ENCODE measurements at regions of chr5 and their contacts with region 1.

Region 1: DNA sequence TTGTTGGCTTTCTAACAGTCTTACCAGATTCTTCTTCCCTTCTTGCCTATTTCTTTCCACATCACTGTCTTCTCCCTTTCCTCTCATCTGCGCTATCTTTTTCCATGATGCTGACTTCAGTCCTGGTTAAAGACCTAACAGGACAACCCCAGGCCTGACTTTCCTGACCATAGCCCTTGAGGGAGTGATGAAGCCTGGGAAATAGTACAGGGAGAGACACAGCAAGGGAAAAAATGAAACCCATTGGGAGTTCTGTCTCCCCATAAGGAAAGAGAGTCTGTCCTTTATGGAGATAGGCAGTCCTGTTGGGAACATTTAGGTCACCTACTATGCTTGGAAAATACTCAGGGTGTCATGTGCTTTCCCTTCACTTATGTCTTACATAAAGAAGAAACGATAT is 92.7 kb downstream of the GIN1 start:
- DNase-seq: no peak
- ATAC-seq: no peak
- H3K4me3 Mint-ChIP-seq: no peak overlapping the region
- H3K27ac Mint-ChIP-seq: no peak overlapping the region
- H3K4me1 Mint-ChIP-seq: no peaks in the 10 kb centered on the region
- H3K27me3 Mint-ChIP-seq: no peaks in the 10 kb centered on the region

Region 2: GRCh38 chr5:102792705-102793104 is 234.6 kb before region 1 on chr5:
- CTCF ChIA-PET with region 1: no interaction called
- POLR2A ChIA-PET with region 1: no interaction called
- intact Hi-C with region 1: loop called (anchors 5 to 10 kb)
- DNase-seq: no peak
- ATAC-seq: peak; percentile 55
- H3K4me3 Mint-ChIP-seq: no peak overlapping the region
- H3K27ac Mint-ChIP-seq: no peak overlapping the region
- H3K4me1 Mint-ChIP-seq: peaks cover 6% of the 10 kb centered on the region
- H3K27me3 Mint-ChIP-seq: no peaks in the 10 kb centered on the region